ENCODE measurements at regions of chr17 and their contacts with region 1.

Region 1: GRCh38 chr17:78186692-78187595 is at the starts of genes AFMID and TK1:
- DNase-seq: peak; percentile 84
- H3K4me3 ChIP-seq: peak within 1 kb of the TSS; percentile 43 to 79 (median 52)
- H3K27ac ChIP-seq: peak within 1 kb of the TSS; percentile 78 to 89 (median 84)
- H3K4me1 ChIP-seq: peaks cover 11 to 63% (median 12%) of the 10 kb centered on the region in 3 donors
- H3K27me3 ChIP-seq: no peaks in the 10 kb centered on the region
- CTCF ChIP-seq: peak; percentile 76 to 97 (median 93)
- POLR2A ChIP-seq: peak in 3 of 4 donors; percentile 46 to 52 (median 48)
- total RNA-seq, gene AFMID: 16.5 to 44.3 (median 30.3) TPM
- total RNA-seq, gene TK1: 11.3 to 57.7 (median 34.3) TPM

Region 2: DNA sequence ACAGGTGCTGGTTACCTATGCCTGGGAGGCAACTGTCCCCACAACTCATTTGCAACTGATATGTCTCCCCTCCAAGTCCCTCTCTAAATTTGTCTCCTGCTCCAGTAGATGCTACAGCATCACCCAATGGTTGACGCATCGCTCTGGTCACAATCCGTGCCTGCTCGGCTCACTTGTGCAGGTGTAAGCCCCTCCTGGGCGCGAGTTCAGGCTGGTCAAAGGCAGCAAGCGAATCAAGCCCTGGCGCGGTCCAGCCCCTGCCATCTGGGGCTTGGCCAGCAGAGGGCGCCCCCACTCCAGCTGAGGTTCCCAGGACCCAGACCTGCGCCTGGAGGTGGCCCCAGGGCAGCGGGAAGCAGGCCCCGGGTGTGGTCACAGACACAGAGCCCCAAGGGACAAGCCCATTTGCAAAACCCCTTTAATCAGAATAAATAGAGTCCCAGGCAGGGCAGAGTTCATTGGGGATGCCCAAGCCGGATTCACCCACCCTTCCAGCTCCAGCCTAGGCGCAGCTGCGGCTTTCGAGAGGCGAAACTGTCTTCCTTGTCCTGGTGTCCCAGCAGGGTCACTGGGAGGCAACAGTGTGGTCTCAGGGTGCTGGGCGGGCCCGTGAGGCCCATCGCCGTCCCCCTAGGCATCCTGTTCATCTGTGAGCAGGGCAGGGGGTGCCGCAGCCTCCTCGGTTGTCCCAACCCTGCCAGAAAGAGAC is 74.3 kb before region 1 on chr17:
- intact Hi-C with region 1: no loop called
- DNase-seq: no peak
- H3K4me3 ChIP-seq: no peak overlapping the region
- H3K27ac ChIP-seq: no peak overlapping the region
- H3K4me1 ChIP-seq: peaks cover 15 to 48% (median 19%) of the 10 kb centered on the region in 3 donors
- H3K27me3 ChIP-seq: no peaks in the 10 kb centered on the region
- CTCF ChIP-seq: peak; percentile 98 to 99 (median 99)
- POLR2A ChIP-seq: peak in 1 of 4 donors; percentile 15

Region 3: GRCh38 chr17:78250891-78251794 is 64.2 kb after region 1 on chr17:
- intact Hi-C with region 1: loop called (anchors 5 kb)
- DNase-seq: no peak
- H3K4me3 ChIP-seq: peak overlapping the region in 1 of 4 donors; percentile 41
- H3K27ac ChIP-seq: peak overlapping the region in 3 of 4 donors; percentile 17 to 31 (median 25)
- H3K4me1 ChIP-seq: peaks cover 17 to 39% (median 17%) of the 10 kb centered on the region in 3 donors
- H3K27me3 ChIP-seq: peaks cover 0 to 8% (median 0%) of the 10 kb centered on the region in 4 donors
- CTCF ChIP-seq: peak; percentile 96 to 100 (median 99)
- POLR2A ChIP-seq: no peak

Measured in esophagus squamous epithelium (tissue), 5 donors.